Calu3 (cell line): ENCODE measurements at regions of chr11 and their contacts with region 1.

Region 1: GRCh38 chr11:79493555-79494171 is 52.8 kb upstream of the TENM4 start:
- DNase-seq: peak; percentile 78
- H3K4me3 Mint-ChIP-seq: no peak overlapping the region
- H3K27ac Mint-ChIP-seq: no peak overlapping the region
- H3K4me1 Mint-ChIP-seq: no peaks in the 10 kb centered on the region
- H3K27me3 Mint-ChIP-seq: peaks cover 27% of the 10 kb centered on the region
- CTCF ChIP-seq: peak; percentile 85

Region 2: DNA sequence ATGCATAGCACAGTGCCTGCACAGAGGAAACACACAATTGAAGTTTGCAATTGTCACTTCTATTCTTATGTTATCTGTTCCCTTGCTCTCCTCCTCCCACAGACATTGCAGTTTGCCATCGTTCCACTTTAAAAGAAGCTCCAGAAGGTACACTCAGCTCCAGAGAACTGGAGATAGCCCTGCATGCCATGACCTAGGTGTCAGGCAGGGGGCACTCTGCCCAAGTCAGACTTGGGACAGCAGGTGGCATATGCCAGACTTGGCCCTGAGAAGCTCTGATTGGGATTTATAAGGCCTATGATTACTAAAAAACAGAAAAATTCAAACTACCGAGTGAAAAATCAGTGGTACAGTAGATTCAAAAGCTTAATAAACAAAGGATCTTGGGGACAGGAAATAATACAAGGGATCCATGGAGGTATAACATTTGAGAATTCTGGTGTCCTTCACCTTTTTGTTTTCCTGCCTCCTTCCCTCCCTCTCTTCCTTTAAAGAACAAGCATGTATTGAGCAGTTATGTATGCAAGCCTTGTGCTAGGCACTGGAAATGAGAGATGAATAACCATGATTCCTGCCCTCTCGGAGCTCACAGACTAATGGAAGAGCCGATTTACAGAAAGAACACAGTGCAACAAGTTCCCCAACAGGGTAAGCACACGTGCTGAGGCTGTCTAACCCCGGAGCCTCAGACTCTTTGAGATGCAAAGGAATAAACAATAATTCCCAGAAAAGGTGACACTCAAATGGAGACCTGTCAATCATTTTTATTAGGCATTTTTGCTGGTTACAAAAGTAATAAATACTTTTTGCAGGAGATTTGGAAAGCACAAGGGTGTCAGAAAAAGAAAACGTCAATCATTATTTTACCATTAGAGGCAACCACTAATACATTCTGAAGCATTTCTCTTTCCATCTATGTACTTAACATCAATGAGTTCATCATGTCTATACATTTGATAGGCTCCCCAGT is 92.7 kb before region 1 on chr11:
- CTCF ChIA-PET with region 1: interaction called, 5 read pairs
- intact Hi-C with region 1: loop called (anchors 1 kb)
- DNase-seq: peak; percentile 43
- H3K4me3 Mint-ChIP-seq: no peak overlapping the region
- H3K27ac Mint-ChIP-seq: no peak overlapping the region
- H3K4me1 Mint-ChIP-seq: no peaks in the 10 kb centered on the region
- H3K27me3 Mint-ChIP-seq: no peaks in the 10 kb centered on the region
- CTCF ChIP-seq: peak; percentile 49